ENCODE measurements at regions of chr10 and their contacts with region 1.

Region 1: DNA sequence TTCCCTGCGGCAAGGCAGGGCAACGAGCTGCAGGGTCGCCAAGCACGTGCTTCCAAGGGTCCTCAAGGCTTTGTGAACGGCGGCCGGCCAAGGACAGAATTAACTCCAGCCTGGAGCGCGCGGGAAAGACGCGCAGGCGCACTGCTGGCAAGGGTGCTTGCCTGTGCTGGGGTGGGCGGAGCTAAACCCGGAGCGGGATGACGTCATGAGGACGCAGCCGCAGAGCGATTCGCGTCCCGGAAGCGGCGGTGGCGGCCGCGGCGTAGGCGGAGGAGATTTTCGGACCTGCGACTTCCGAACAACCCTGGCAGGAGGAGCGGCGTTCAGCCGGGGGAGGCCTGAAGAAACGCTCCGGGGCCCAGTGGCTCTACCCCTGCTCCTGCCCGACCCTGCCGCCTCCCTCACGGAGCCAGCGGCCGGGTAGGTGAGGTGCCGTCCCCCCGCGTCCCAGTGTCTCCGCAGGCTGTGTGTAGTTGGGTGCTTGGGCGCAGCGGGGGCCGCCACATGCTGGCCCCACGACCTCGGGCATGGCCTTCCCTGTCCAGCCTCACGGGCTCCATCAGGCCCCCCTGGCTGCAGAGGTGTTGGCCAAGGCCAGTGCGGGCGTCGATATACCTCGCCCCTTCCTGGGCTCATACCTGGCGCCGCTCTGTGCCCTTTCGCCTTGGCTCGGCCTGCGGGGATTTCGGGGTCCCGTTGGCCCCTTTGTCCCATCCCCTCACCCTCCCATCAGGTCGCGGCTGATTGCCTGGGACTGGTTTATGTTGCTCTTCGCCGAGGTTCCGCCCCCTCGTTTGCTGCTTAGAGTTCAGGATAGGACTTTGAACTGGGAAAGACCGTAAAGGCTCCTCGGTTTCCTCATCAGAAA is at the start of gene ZFYVE27:
- DNase-seq: peak; percentile 98
- ATAC-seq: peak; percentile 90
- H3K4me3 Mint-ChIP-seq: peak within 1 kb of the TSS; percentile 88
- H3K27ac Mint-ChIP-seq: peak within 1 kb of the TSS; percentile 93
- H3K4me1 Mint-ChIP-seq: peaks cover 45% of the 10 kb centered on the region
- H3K27me3 Mint-ChIP-seq: no peaks in the 10 kb centered on the region
- total RNA-seq, gene ZFYVE27: 20.2 to 22.6 TPM

Region 2: GRCh38 chr10:97334370-97335175 is 402.6 kb before region 1 on chr10 and contains the start of gene FRAT2:
- CTCF ChIA-PET with region 1: no interaction called
- POLR2A ChIA-PET with region 1: no interaction called
- intact Hi-C with region 1: loop called in 1 of 2 experiments (anchors 5 kb)
- DNase-seq: peak; percentile 91
- ATAC-seq: peak; percentile 85
- H3K4me3 Mint-ChIP-seq: peak within 1 kb of the TSS; percentile 83
- H3K27ac Mint-ChIP-seq: peak within 1 kb of the TSS; percentile 86
- H3K4me1 Mint-ChIP-seq: peaks cover 40% of the 10 kb centered on the region
- H3K27me3 Mint-ChIP-seq: no peaks in the 10 kb centered on the region
- total RNA-seq, gene FRAT2: 3.0 to 4.3 TPM

Region 3: GRCh38 chr10:97640174-97640867 is 96.8 kb before region 1 on chr10 and contains the start of gene PI4K2A:
- CTCF ChIA-PET with region 1: no interaction called
- POLR2A ChIA-PET with region 1: no interaction called
- intact Hi-C with region 1: loop called in 1 of 2 experiments (anchors 2 kb)
- DNase-seq: peak; percentile 100
- ATAC-seq: peak; percentile 99
- H3K4me3 Mint-ChIP-seq: peak within 1 kb of the TSS; percentile 97
- H3K27ac Mint-ChIP-seq: peak within 1 kb of the TSS; percentile 93
- H3K4me1 Mint-ChIP-seq: peaks cover 18% of the 10 kb centered on the region
- H3K27me3 Mint-ChIP-seq: no peaks in the 10 kb centered on the region
- total RNA-seq, gene PI4K2A: 8.5 to 8.9 TPM

Region 4: DNA sequence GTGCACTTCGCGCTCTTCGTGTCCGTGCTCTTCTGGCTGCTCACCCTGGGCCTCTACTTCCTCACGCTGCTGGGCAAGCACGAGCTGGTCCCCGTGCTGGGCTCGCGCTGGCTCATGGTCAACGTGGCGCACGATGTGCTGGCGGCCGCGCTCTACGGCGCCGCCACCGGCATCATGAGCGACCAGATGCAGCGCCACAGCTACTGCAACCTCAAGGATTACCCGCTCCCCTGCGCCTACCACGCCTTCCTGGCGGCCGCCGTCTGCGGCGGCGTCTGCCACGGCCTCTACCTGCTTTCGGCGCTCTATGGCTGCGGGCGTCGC is 23.1 kb before region 1 on chr10:
- CTCF ChIA-PET with region 1: interaction called, 384 read pairs
- POLR2A ChIA-PET with region 1: interaction called, 6 read pairs
- intact Hi-C with region 1: loop called in 1 of 2 experiments (anchors 1 kb)
- DNase-seq: peak; percentile 74
- ATAC-seq: peak; percentile 85
- H3K4me3 Mint-ChIP-seq: peak overlapping the region; percentile 79
- H3K27ac Mint-ChIP-seq: peak overlapping the region; percentile 88
- H3K4me1 Mint-ChIP-seq: peaks cover 11% of the 10 kb centered on the region
- H3K27me3 Mint-ChIP-seq: peaks cover 19% of the 10 kb centered on the region

Region 5: DNA sequence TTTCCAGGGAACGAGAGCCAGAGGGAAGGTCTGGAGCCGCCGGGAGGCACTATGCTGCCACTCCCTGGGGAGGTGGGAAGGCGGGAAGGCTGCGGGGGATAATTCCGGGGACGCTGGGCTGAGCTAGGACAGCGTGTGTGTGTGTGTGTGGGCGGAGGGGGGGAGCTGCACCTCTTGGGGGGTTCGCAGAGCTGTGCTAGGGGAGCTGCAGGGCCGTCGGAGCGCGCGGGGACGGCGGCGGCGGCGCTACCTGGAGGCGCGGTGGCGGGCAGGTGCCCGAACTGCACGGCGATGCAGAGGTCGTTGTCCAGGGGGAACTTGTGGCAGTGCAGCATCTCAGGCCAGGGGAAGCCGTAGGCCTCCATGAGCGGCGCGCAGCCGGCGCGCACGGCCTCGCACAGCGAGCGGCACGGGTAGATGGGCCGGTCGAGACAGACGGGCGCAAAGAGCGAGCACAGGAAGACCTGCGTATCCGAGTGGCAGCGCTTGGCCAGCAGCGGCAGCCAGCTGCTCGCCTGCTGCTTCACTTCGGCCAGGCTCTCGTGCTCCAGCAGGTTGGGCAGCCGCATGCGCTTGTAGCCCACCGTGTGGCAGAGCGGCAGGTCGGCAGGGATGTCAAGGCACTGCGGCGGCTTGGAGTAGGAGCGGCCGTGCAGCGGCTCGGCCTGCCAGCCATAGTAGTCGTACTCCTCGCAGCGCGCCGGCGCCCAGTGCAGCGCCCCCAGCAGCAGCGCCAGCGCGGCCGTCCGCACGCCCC is 34.1 kb after region 1 on chr10:
- CTCF ChIA-PET with region 1: no interaction called
- POLR2A ChIA-PET with region 1: no interaction called
- intact Hi-C with region 1: no loop called
- DNase-seq: peak; percentile 23
- ATAC-seq: peak; percentile 55
- H3K4me3 Mint-ChIP-seq: peak overlapping the region; percentile 30
- H3K27ac Mint-ChIP-seq: no peak overlapping the region
- H3K4me1 Mint-ChIP-seq: peaks cover 9% of the 10 kb centered on the region
- H3K27me3 Mint-ChIP-seq: peaks cover 29% of the 10 kb centered on the region

Region 6: GRCh38 chr10:97782455-97783228 is 45.5 kb after region 1 on chr10:
- CTCF ChIA-PET with region 1: no interaction called
- POLR2A ChIA-PET with region 1: no interaction called
- intact Hi-C with region 1: no loop called
- DNase-seq: no peak
- ATAC-seq: no peak
- H3K4me3 Mint-ChIP-seq: no peak overlapping the region
- H3K27ac Mint-ChIP-seq: no peak overlapping the region
- H3K4me1 Mint-ChIP-seq: peaks cover 22% of the 10 kb centered on the region
- H3K27me3 Mint-ChIP-seq: no peaks in the 10 kb centered on the region

Region 7: DNA sequence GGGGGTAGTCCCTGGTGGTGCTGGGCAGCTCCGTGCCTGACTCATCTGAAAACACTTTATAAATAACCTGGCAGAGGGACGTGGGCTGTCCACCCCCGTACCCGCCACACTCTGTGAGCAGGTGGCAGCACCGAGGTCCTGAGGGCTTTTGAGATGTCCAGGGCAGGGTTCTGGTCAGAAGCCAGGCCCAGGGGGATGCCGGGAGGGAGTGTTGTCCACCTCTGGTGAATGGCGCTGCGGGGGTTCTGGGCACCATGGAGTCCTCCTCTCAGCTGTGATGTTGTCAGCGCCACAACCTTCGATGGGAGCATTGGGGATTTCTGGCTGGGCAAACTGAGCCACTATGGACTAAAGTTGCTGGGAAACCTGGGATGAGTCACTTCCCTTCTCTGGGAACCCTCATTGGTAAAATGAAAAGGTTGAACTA is 85.1 kb after region 1 on chr10:
- CTCF ChIA-PET with region 1: no interaction called
- POLR2A ChIA-PET with region 1: no interaction called
- intact Hi-C with region 1: no loop called
- DNase-seq: no peak
- ATAC-seq: no peak
- H3K4me3 Mint-ChIP-seq: no peak overlapping the region
- H3K27ac Mint-ChIP-seq: no peak overlapping the region
- H3K4me1 Mint-ChIP-seq: no peaks in the 10 kb centered on the region
- H3K27me3 Mint-ChIP-seq: no peaks in the 10 kb centered on the region

Region 8: GRCh38 chr10:97869091-97870042 is 132.2 kb after region 1 on chr10:
- CTCF ChIA-PET with region 1: interaction called, 3 read pairs
- POLR2A ChIA-PET with region 1: no interaction called
- intact Hi-C with region 1: loop called in 1 of 2 experiments (anchors 1 kb)
- DNase-seq: peak; percentile 93
- ATAC-seq: peak; percentile 100
- H3K4me3 Mint-ChIP-seq: no peak overlapping the region
- H3K27ac Mint-ChIP-seq: peak overlapping the region; percentile 83
- H3K4me1 Mint-ChIP-seq: peaks cover 10% of the 10 kb centered on the region
- H3K27me3 Mint-ChIP-seq: no peaks in the 10 kb centered on the region